OCI-LY7 (cell line): ENCODE measurements at regions of chr2 and their contacts with region 1.

Region 1: DNA sequence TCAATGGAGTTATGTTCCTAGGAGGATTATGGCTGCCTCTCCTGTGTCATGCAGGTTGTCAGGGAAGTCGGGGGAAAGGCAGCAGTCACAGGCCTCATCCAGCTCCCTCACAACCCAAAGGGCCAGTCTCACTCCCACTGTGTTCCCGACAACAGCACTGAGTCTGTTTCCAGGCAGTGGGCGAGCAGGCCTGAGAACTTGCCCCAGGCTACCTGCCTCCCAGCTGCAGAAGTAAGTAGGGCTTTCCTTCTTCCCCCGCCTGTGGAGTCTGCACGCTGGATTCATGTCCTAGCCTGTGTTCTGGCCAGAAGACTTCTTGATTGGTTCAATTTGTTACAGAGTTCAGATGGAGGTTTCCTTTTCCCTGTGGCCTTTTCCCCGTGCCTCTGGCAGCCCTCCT is 8.2 kb upstream of the ZNF638 start:
- DNase-seq: no peak
- H3K4me3 ChIP-seq: no peak overlapping the region
- H3K27ac ChIP-seq: no peak overlapping the region
- H3K4me1 ChIP-seq: no peaks in the 10 kb centered on the region
- CTCF ChIP-seq: no peak

Region 2: DNA sequence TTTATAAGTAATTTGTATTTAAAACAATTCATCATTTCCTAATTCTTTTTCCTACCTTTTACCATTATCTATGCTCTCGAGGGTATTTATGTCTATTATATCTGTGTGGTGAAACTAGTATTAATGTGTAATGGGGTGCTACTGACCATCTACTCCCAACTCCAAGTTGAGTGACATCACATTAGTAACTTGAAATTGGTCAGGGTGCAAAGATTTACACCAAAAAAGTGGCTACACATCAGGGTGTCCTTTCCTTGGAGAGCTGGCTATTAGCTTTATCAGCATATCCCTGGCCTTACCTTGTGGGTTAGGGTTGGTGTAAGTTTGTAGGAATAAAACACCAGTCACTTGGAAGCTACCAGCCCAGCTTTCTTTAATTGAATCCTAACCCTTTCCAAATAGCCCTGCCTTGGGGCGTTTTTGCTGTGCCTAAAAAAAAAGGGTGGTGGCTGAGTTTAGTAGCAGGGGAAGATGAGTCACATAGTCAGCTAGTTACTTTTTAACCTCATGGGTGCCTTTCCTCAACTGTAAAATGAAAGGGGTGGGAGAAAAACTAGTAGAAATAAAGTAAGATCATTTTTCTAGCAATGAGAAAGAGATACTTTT is 1567.4 kb before region 1 on chr2:
- CTCF ChIA-PET with region 1: no interaction called
- POLR2A ChIA-PET with region 1: no interaction called
- intact Hi-C with region 1: no loop called
- DNase-seq: no peak
- H3K4me3 ChIP-seq: no peak overlapping the region
- H3K27ac ChIP-seq: no peak overlapping the region
- H3K4me1 ChIP-seq: no peaks in the 10 kb centered on the region
- CTCF ChIP-seq: no peak

Region 3: DNA sequence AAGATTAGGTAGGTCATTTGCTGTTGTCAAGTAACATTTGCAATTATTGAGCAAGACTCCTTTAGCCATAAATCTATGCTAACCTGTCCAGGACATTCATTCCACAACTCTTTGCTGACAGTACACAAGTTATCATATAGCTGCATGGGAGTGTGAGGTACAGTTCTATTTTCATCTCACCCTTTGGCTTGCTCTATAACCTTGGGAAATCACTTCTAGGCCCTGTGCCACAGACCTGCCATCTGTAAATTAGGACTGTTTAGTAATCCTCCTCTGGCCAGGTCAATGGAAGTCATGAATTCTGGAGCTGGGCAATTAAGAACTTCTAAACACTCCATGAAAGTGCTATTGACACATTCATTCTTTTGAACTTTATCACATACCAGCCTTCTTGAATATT is 61.9 kb before region 1 on chr2:
- CTCF ChIA-PET with region 1: no interaction called
- POLR2A ChIA-PET with region 1: interaction called, 10 read pairs
- intact Hi-C with region 1: no loop called
- DNase-seq: no peak
- H3K4me3 ChIP-seq: no peak overlapping the region
- H3K27ac ChIP-seq: no peak overlapping the region
- H3K4me1 ChIP-seq: no peaks in the 10 kb centered on the region
- CTCF ChIP-seq: no peak

Region 4: DNA sequence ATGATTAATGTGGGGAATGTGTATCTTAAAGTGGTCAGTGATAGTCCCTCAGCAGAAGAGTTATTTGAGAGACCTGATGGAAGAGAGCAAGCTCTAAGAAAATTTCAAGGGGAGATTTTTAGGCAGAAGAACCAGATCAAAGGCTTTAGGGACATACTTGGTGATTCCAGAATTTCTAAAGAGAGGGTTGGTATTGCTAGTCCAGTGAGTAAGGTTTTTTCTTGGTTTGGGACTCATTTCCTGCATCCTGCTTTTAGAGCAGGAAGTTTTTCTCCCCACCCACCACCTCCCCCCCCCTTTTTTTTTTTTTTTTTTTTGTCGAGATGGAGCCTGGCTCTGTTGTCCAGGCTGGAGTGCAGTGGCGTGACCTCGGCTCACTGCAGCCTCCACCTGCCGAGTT is 87.3 kb after region 1 on chr2:
- CTCF ChIA-PET with region 1: no interaction called
- POLR2A ChIA-PET with region 1: no interaction called
- intact Hi-C with region 1: no loop called
- DNase-seq: no peak
- H3K4me3 ChIP-seq: no peak overlapping the region
- H3K27ac ChIP-seq: no peak overlapping the region
- H3K4me1 ChIP-seq: no peaks in the 10 kb centered on the region
- CTCF ChIP-seq: no peak